PC-3 (cell line): ENCODE measurements at regions of chr12 and their contacts with region 1.

Region 1: DNA sequence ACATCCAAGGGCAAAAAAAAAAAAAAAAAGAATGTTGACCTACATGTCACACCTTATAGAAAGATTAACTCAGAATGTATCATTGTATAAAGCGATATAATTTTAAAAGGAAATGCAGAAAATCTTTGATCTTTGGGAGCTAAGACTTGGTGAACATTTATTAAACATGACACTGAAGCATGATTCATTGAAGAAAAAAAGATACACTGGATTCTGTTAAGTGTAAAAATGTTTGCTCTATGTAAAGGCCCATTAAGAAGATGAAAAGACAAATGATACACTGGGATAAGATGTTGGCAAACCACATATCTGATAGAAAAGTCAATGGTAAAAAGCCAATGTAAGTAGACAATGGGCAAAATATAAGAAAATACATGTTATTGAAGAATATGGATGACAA is 1131.0 kb downstream of the AACS start:
- DNase-seq: no peak
- ATAC-seq: no peak
- H3K4me3 ChIP-seq: no peak overlapping the region
- H3K27ac ChIP-seq: no peak overlapping the region
- H3K4me1 ChIP-seq: no peaks in the 10 kb centered on the region; the same call in 1 of the 2 replicates
- H3K27me3 ChIP-seq: peaks cover 17% of the 10 kb centered on the region
- CTCF ChIP-seq: no peak

Region 2: GRCh38 chr12:126219654-126220279 is 23.5 kb after region 1 on chr12:
- CTCF ChIA-PET with region 1: no interaction called
- POLR2A ChIA-PET with region 1: interaction called, 20 read pairs
- intact Hi-C with region 1: no loop called
- DNase-seq: no peak
- ATAC-seq: no peak
- H3K4me3 ChIP-seq: no peak overlapping the region
- H3K27ac ChIP-seq: no peak overlapping the region
- H3K4me1 ChIP-seq: no peaks in the 10 kb centered on the region
- H3K27me3 ChIP-seq: no peaks in the 10 kb centered on the region
- CTCF ChIP-seq: no peak